A549 (cell line): ENCODE measurements at regions of chr3 and their contacts with region 1.

Region 1: DNA sequence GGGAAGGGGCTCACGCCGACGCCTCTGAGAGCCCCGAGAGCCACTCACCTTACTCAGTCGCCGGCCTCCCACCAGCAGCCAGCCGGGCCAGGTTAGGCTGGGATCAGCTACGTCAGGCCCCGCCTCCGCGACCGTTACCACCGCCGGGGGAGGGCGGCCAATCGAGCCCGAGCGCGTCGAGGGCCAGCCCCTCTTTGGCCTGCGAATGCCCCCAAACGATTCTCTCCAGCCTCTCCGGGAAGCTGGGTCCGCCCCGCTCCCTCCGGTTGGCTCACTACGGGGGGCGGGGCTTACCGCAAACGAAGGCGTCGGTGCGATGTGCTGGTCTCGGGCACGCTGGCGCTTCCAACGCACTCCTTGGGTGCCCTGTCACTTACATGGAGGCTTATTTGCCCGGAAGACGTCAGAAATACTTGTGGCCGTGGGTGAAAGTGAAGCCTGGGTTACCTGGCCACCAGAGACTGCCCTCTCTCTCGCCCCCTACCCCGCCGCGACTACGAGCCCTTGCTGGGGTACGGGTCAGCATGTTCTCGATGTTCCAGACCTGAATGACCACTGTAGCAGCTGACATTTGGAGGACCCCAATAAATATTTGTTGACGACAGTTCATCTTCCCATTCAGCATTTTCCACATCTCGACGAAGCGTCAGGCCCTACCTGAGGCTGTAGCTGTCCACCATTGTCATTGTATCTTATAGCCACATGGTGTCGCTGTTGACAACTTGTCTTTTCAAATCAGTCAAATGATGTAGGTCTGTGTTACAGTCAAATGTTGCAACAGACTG is at the start of gene CEP70:
- DNase-seq: peak; percentile 68 to 91
- ATAC-seq: peak; percentile 98 to 99
- H3K4me3 ChIP-seq: peak within 1 kb of the TSS; percentile 79
- H3K27ac ChIP-seq: peak within 1 kb of the TSS; percentile 89 to 92
- H3K4me1 ChIP-seq: peaks cover 23% of the 10 kb centered on the region
- CTCF ChIP-seq: peak; percentile 83
- EP300 ChIP-seq: no peak
- POLR2A ChIP-seq: peak; percentile 57; the same call in 1 of the 2 replicates
- RAD21 ChIP-seq: peak; percentile 75 to 76
- polyA plus RNA-seq, gene CEP70: 9.4 and 17.1 TPM in 2 replicates

Region 2: GRCh38 chr3:138608322-138609135 is 14.2 kb after region 1 on chr3 and contains the start of gene FAIM:
- CTCF ChIA-PET with region 1: interaction called, 16 read pairs
- POLR2A ChIA-PET with region 1: interaction called, 8 read pairs
- DNase-seq: peak; percentile 46 to 78
- ATAC-seq: peak; percentile 89
- H3K4me3 ChIP-seq: peak within 1 kb of the TSS; percentile 60
- H3K27ac ChIP-seq: peak within 1 kb of the TSS; percentile 99 to 100
- H3K4me1 ChIP-seq: peaks cover 11% of the 10 kb centered on the region; the same call in 2 of the 3 replicates
- CTCF ChIP-seq: no peak
- EP300 ChIP-seq: no peak
- POLR2A ChIP-seq: peak; percentile 29; the same call in 1 of the 2 replicates
- RAD21 ChIP-seq: no peak
- polyA plus RNA-seq, gene FAIM: 7.3 and 13.7 TPM in 2 replicates

Region 3: DNA sequence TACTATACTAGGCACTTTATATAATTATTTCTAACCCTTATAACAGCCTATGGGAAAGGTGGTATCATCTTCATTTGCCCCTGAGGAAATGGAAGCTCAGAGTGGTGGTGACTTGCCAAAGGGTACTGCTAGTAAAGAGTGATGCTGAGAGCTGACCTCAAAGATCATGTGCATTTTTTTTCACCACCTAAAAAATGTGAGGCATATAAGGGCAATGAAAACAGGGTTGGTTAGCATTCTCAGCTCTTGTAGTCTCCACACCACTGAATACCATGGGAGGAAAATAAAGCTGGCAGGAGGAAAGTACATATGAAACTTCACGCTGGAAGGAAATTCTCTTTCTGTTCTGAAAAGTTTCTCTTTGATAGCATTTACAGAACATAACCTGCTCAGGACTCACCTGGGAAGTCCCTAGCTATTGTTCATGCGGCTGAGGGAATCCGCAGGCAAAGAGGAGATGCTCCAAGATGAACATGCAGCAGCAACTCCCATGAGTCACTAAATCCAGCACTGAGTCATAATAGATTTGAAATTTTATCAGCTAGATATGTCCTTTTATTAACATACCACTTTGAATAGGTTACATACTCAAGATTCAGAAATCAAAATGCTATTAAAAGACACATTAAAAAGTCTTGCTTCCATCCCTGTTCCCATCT is 31.5 kb after region 1 on chr3:
- CTCF ChIA-PET with region 1: interaction called, 15 read pairs
- POLR2A ChIA-PET with region 1: no interaction called
- DNase-seq: no peak
- ATAC-seq: peak; percentile 47 to 59; a peak in 2 of 6 replicates
- H3K4me3 ChIP-seq: no peak overlapping the region
- H3K27ac ChIP-seq: no peak overlapping the region
- H3K4me1 ChIP-seq: peaks cover 10% of the 10 kb centered on the region; the same call in 2 of the 3 replicates
- CTCF ChIP-seq: no peak
- EP300 ChIP-seq: no peak
- POLR2A ChIP-seq: no peak
- RAD21 ChIP-seq: no peak

Region 4: DNA sequence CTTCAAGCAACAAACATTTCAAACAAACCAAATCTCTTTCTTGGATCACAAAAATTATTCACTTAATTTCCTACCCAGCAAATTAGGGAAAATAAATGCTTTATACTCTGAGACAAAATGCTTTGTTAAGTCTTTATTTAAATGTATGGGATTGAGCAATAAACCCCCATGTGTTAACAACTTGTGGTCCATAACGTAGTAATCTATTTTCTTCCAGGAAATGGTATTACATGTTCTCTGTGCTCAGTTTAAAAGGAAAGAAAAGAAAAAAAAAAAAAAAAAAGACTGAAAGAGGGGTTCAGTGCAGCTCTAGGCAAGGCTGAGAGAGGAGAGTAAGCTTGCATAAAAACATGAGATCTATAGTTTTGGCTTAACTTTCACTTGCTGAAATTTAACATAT is 138.1 kb after region 1 on chr3:
- CTCF ChIA-PET with region 1: no interaction called
- POLR2A ChIA-PET with region 1: no interaction called
- DNase-seq: no peak
- ATAC-seq: no peak
- H3K4me3 ChIP-seq: no peak overlapping the region
- H3K27ac ChIP-seq: no peak overlapping the region
- H3K4me1 ChIP-seq: no peaks in the 10 kb centered on the region
- CTCF ChIP-seq: no peak
- EP300 ChIP-seq: no peak
- POLR2A ChIP-seq: no peak
- RAD21 ChIP-seq: no peak

Region 5: DNA sequence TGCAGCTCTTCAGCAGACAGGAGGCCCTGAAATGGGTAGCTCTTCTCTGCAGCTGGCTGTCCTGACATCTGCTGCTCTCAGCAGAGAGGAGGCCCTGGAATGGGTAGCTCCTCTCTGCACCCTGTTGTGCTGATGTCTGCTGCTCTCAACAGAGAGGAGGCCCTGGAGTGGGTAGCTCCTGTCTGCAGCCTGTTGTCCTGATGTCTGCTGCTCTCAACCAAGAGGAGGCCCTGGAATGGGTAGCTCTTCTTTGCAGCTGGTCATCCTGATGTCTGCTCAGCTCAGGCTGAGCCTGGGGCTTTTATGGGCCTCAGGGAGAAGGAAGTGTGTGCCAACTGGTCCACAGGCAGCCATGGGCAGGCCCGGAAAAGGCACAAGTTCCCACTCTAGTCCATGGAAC is 173.8 kb after region 1 on chr3:
- CTCF ChIA-PET with region 1: no interaction called
- POLR2A ChIA-PET with region 1: no interaction called
- DNase-seq: peak in 1 of 2 experiments; percentile 42
- ATAC-seq: no peak
- H3K4me3 ChIP-seq: no peak overlapping the region
- H3K27ac ChIP-seq: no peak overlapping the region
- H3K4me1 ChIP-seq: peaks cover 17% of the 10 kb centered on the region; the same call in 2 of the 3 replicates
- CTCF ChIP-seq: no peak
- EP300 ChIP-seq: no peak
- POLR2A ChIP-seq: no peak
- RAD21 ChIP-seq: no peak

Region 6: GRCh38 chr3:138935848-138936740 is 341.8 kb after region 1 on chr3:
- CTCF ChIA-PET with region 1: interaction called, 17 read pairs
- POLR2A ChIA-PET with region 1: interaction called, 5 read pairs
- DNase-seq: peak; percentile 64 to 75
- ATAC-seq: peak; percentile 91
- H3K4me3 ChIP-seq: peak overlapping the region; percentile 45
- H3K27ac ChIP-seq: peak overlapping the region; percentile 69 to 93
- H3K4me1 ChIP-seq: no peaks in the 10 kb centered on the region
- CTCF ChIP-seq: peak; percentile 62
- EP300 ChIP-seq: no peak
- POLR2A ChIP-seq: peak; percentile 15; the same call in 1 of the 2 replicates
- RAD21 ChIP-seq: peak; percentile 45 to 47; a peak in 4 of 5 replicates

Region 7: GRCh38 chr3:139202226-139202958 is 608.0 kb after region 1 on chr3:
- CTCF ChIA-PET with region 1: no interaction called
- POLR2A ChIA-PET with region 1: no interaction called
- DNase-seq: peak in 1 of 2 experiments; percentile 35
- ATAC-seq: peak; percentile 66 to 67; a peak in 4 of 6 replicates
- H3K4me3 ChIP-seq: no peak overlapping the region
- H3K27ac ChIP-seq: no peak overlapping the region
- H3K4me1 ChIP-seq: no peaks in the 10 kb centered on the region
- CTCF ChIP-seq: no peak
- EP300 ChIP-seq: no peak
- POLR2A ChIP-seq: no peak
- RAD21 ChIP-seq: peak; percentile 29 to 41; a peak in 1 of 5 replicates